Activated CD8-positive, alpha-beta T cell treated with anti-CD3 and anti-CD28 coated beads, Interleukin-2, amount 10 ng/mL, durations not matched to agents 7 days and 5 days (primary cell): ENCODE measurements at regions of chr11 and their contacts with region 1.

Region 1: GRCh38 chr11:72430741-72431570 is 3.4 kb downstream of the CLPB start:
- DNase-seq: peak; percentile 60
- ATAC-seq: peak; percentile 28
- H3K4me3 Mint-ChIP-seq: no peak overlapping the region
- H3K27ac Mint-ChIP-seq: peak overlapping the region; percentile 53
- H3K4me1 Mint-ChIP-seq: peaks cover 51% of the 10 kb centered on the region
- H3K27me3 Mint-ChIP-seq: no peaks in the 10 kb centered on the region

Region 2: GRCh38 chr11:72030472-72031045 is 400.4 kb before region 1 on chr11:
- CTCF ChIA-PET with region 1: interaction called, 42 read pairs
- POLR2A ChIA-PET with region 1: no interaction called
- DNase-seq: no peak
- ATAC-seq: no peak
- H3K4me3 Mint-ChIP-seq: no peak overlapping the region
- H3K27ac Mint-ChIP-seq: no peak overlapping the region
- H3K4me1 Mint-ChIP-seq: peaks cover 19% of the 10 kb centered on the region
- H3K27me3 Mint-ChIP-seq: no peaks in the 10 kb centered on the region

Region 3: GRCh38 chr11:72112321-72113219 is 318.4 kb before region 1 on chr11 and contains the start of gene ANAPC15:
- CTCF ChIA-PET with region 1: interaction called, 10 read pairs
- POLR2A ChIA-PET with region 1: interaction called, 4 read pairs
- DNase-seq: peak; percentile 100
- ATAC-seq: peak; percentile 93
- H3K4me3 Mint-ChIP-seq: peak within 1 kb of the TSS; percentile 95
- H3K27ac Mint-ChIP-seq: peak within 1 kb of the TSS; percentile 100
- H3K4me1 Mint-ChIP-seq: peaks cover 20% of the 10 kb centered on the region
- H3K27me3 Mint-ChIP-seq: no peaks in the 10 kb centered on the region
- total RNA-seq, gene ANAPC15: 62.9 to 69.5 TPM

Region 4: DNA sequence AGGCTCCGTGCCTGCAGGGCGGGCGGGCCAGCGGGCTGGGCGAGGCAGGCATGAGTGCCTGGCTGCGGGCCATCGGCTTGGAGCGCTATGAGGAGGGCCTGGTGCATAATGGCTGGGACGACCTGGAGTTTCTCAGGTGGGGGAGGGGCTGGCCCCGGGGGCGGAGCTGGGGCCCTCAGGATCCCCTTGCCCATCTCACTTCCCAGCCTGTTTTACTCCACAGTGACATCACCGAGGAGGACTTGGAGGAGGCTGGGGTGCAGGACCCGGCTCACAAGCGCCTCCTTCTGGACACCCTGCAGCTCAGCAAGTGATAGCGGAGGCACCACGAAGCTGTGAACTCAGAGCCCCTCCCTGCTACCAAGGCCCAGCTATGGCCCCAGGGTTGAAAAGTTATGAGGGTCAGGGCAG is 192.9 kb before region 1 on chr11:
- CTCF ChIA-PET with region 1: interaction called, 16 read pairs
- POLR2A ChIA-PET with region 1: interaction called, 4 read pairs
- DNase-seq: peak; percentile 58
- ATAC-seq: peak; percentile 55
- H3K4me3 Mint-ChIP-seq: no peak overlapping the region
- H3K27ac Mint-ChIP-seq: no peak overlapping the region
- H3K4me1 Mint-ChIP-seq: peaks cover 20% of the 10 kb centered on the region
- H3K27me3 Mint-ChIP-seq: peaks cover 35% of the 10 kb centered on the region

Region 5: GRCh38 chr11:72317982-72318381 is 113.0 kb before region 1 on chr11:
- CTCF ChIA-PET with region 1: interaction called, 12 read pairs
- POLR2A ChIA-PET with region 1: no interaction called
- DNase-seq: no peak
- ATAC-seq: no peak
- H3K4me3 Mint-ChIP-seq: no peak overlapping the region
- H3K27ac Mint-ChIP-seq: no peak overlapping the region
- H3K4me1 Mint-ChIP-seq: peaks cover 8% of the 10 kb centered on the region
- H3K27me3 Mint-ChIP-seq: no peaks in the 10 kb centered on the region

Region 6: DNA sequence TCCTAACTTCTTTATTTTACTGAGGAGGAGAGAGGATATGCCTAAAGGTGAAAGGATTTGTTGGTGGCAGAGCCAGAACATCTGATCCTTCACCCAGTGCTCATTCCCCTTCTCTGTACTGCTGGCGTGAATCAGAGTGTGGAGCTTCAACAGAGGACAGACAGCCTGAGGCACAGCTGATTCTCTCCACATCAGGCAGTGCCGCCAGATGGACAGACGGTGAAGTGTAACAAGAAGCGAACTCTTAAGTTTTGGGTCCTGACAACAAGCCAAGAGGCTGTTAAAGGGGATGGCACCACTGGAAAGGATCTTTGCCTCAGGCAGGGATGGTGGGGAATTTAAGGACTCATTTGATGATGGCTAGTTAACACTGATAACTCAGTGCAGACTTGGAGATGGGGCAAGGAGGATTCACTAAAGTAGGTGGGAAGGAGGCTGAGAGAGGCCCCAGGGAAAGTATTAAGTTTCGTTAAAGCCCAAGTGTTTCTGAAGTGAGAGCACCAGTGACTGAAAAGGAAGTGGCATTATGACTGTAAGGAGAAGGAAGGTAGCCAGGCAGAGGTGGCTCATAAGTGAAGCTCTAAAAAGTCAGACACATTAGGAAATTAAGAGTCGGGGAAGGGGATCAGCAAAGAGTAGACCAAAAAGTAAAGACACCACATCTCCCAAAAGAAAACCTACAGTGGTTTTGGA is 78.0 kb before region 1 on chr11:
- CTCF ChIA-PET with region 1: interaction called, 18 read pairs
- POLR2A ChIA-PET with region 1: no interaction called
- DNase-seq: no peak
- ATAC-seq: peak; percentile 36
- H3K4me3 Mint-ChIP-seq: no peak overlapping the region
- H3K27ac Mint-ChIP-seq: no peak overlapping the region
- H3K4me1 Mint-ChIP-seq: no peaks in the 10 kb centered on the region
- H3K27me3 Mint-ChIP-seq: no peaks in the 10 kb centered on the region

Region 7: DNA sequence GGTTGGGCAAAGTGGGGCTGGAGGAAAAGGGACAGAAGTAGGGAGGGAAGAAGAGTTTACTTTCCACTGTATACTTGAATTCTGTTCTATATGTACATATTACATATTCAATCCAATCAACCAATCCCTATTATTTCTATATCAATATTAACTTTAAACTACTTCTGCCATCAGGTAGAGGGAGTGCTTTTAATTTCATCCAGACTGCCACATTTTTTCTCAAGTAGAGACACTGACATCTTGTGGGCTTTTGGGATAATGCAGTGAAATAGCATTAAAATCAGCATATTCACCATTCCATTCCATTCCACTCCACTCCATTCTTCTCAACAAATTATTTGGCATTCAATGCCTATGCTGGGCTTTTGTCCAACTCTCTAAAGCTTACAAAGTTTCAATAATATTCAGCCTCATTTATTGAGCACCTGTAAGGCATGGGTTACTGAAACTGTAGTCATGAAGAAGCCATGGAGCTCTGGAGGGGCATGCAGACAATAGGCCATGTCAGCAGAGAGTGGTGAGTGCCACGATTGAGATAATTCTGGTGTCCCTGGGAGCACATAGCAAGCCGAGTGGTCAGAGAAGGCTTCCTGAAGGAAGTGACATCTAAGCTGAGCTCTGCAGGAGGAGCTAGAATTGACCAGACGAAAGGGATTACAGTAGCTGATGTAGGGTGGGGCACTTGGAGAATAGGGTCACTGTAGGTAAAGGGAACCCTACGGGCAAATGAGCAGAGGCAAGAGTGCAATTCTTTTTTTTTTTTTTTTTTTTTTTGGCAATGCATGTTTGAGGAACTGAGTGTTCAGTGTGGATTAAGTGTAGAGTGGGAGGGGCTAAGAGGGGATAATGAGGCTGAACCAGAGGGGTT is 16.2 kb after region 1 on chr11:
- CTCF ChIA-PET with region 1: interaction called, 71 read pairs
- POLR2A ChIA-PET with region 1: no interaction called
- DNase-seq: peak; percentile 38
- ATAC-seq: peak; percentile 67
- H3K4me3 Mint-ChIP-seq: no peak overlapping the region
- H3K27ac Mint-ChIP-seq: no peak overlapping the region
- H3K4me1 Mint-ChIP-seq: no peaks in the 10 kb centered on the region
- H3K27me3 Mint-ChIP-seq: peaks cover 30% of the 10 kb centered on the region